B cell (primary cell): ENCODE measurements at regions of chr14 and their contacts with region 1.

Region 1: DNA sequence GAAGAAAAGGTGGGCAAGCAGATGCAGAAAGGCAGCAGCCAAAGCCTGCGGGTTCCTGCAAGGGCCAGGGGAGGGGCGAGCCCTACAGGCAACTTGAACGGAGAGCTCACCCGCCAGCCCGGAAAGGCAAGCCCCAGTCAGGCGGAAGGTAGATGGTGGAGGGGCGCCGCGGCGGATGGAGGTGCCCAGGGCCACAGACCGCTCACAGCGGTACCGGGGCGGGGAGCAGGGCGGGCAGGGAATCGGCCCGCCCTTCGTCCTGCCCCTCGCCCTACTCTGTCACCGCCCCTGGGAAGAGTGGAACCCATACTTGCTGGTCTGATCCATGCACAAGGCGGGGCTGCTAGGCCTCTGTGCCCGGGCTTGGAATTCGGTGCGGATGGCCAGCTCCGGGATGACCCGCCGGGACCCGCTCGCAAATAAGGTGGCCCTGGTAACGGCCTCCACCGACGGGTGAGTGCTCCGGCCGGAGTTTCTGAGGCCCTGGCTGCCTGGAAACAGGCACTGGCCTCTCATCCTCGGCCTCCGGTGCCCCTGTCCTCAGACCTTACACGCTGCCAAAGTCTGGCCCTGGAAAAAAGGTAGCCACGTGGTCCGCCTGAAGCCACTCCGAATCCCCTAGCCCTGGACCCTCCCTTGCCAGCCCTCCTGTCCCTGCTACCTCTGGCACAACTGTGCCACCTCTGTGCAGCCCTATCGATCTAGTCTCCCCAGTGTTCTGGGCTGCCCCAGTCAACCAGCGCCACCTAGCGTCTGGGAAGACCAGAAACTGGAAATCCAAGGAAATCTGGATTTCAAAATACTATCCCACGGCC is at the start of gene DHRS4:
- DNase-seq: peak; percentile 83
- ATAC-seq: peak; percentile 94
- H3K4me3 ChIP-seq: peak within 1 kb of the TSS; percentile 32 to 97 (median 70)
- H3K4me3 Mint-ChIP-seq: peak within 1 kb of the TSS; percentile 97
- H3K27ac ChIP-seq: peak within 1 kb of the TSS; percentile 40 to 63
- H3K27ac Mint-ChIP-seq: peak within 1 kb of the TSS; percentile 90
- H3K4me1 ChIP-seq: peaks cover 7 to 16% of the 10 kb centered on the region in 2 donors
- H3K4me1 Mint-ChIP-seq: peaks cover 25% of the 10 kb centered on the region
- H3K27me3 ChIP-seq: no peaks in the 10 kb centered on the region
- H3K27me3 Mint-ChIP-seq: no peaks in the 10 kb centered on the region
- CTCF ChIP-seq: peak; percentile 88
- total RNA-seq, gene DHRS4: 15.3 and 15.6 TPM in 2 replicates

Region 2: GRCh38 chr14:23929822-23930294 is 23.8 kb before region 1 on chr14:
- CTCF ChIA-PET with region 1: interaction called, 3 read pairs
- POLR2A ChIA-PET with region 1: no interaction called
- intact Hi-C with region 1: loop called (anchors 1 kb)
- DNase-seq: peak; percentile 77
- ATAC-seq: peak; percentile 84
- H3K4me3 ChIP-seq: no peak overlapping the region
- H3K4me3 Mint-ChIP-seq: no peak overlapping the region
- H3K27ac ChIP-seq: no peak overlapping the region
- H3K27ac Mint-ChIP-seq: no peak overlapping the region
- H3K4me1 ChIP-seq: no peaks in the 10 kb centered on the region
- H3K4me1 Mint-ChIP-seq: no peaks in the 10 kb centered on the region
- H3K27me3 ChIP-seq: no peaks in the 10 kb centered on the region
- H3K27me3 Mint-ChIP-seq: peaks cover 5% of the 10 kb centered on the region
- CTCF ChIP-seq: peak; percentile 96